Activated CD4-positive, alpha-beta memory T cell treated with anti-CD3 and anti-CD28 coated beads, Interleukin-2, amount 10 ng/mL, durations not matched to agents 7 days and 5 days (primary cell): ENCODE measurements at regions of chr14 and their contacts with region 1.

Region 1: DNA sequence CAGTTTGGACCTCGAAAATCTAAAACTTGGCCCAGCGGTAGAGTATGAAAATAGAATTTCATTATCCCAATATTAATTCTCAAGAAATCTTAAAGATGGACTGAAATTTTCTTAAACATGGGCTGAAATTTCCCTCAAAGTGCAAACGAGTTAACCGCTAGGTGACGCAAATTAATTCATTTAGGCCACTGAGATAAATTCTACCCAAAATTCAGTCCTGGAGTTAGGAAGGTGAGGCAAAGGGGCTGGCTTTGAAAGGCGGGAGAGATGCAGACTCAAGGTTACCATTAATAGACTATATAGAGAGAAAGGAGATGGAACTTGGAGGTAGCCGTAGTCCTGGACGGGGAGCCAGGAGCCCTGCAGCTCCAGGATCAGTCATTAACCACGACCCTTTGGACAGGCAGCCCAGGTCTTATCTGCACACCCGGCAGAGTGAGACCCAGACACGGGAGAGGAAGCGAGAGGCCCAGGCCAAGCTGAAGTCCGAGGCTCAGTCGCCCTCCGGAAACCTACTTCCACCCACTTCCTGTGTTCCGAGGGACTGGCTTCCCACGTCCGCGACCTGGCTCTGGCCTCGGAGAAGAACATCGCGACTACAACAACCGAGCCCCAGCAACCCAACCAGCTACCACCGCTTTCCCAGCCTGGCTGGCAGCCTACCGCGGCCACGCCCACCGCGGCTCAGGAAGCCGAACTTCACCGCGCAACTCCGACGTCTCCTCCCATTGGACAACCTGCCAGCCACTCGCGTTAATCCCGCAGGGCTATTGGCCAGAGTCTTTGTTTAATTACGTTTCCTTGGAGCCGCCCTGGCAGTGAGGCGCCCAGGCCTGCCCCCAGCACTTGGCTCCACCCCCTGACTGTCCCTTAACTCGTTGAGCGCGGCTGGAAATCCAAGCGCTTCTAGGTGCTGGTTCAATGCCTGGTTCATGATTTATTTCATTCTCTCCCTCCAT is at the start of gene EFCAB11:
- DNase-seq: peak; percentile 97
- H3K4me3 Mint-ChIP-seq: peak within 1 kb of the TSS; percentile 95
- H3K27ac Mint-ChIP-seq: peak within 1 kb of the TSS; percentile 100
- H3K4me1 Mint-ChIP-seq: peaks cover 42% of the 10 kb centered on the region
- H3K27me3 Mint-ChIP-seq: no peaks in the 10 kb centered on the region
- total RNA-seq, gene EFCAB11: 9.6 to 9.9 TPM

Region 2: DNA sequence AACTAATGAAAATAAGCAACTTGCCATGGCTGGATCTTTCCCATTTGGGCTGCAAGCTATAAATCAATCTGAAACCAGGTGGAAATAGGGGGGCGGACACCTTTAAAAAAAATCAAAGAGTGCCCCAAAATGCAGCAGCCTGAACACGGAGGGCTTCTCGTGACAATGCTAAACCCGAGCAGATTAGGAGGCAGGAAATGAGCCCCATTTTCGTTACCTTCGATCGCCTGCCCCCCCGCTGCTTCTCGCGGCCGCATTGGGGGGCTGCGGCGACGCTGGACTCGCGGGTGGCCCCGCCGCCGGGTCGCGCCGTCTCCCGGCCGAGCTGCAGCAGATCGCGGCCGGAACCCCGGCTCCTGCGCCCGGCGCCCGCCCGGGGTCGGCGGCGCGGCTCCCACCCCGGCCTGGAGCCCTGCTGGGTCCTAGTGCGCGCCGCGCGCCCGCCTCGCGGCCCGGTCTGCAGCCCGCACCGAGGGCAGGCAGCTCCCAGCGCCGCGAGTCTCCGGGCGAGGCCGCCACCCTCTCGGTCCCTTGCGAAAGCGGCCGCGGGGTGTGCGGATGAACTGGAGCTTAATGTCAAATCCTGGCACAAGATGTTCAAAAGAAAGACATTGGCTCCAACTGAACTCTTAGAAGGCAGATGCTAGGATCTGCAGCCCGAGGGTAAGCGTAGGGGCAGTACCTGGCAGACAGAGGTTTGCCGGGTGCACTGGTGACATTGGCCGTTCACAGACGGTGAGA is 335.4 kb before region 1 on chr14:
- CTCF ChIA-PET with region 1: no interaction called
- POLR2A ChIA-PET with region 1: interaction called, 17 read pairs
- DNase-seq: peak; percentile 77
- H3K4me3 Mint-ChIP-seq: peak overlapping the region; percentile 95
- H3K27ac Mint-ChIP-seq: peak overlapping the region; percentile 95
- H3K4me1 Mint-ChIP-seq: peaks cover 61% of the 10 kb centered on the region
- H3K27me3 Mint-ChIP-seq: no peaks in the 10 kb centered on the region

Region 3: GRCh38 chr14:89915114-89915878 is 39.1 kb before region 1 on chr14:
- CTCF ChIA-PET with region 1: no interaction called
- POLR2A ChIA-PET with region 1: no interaction called
- DNase-seq: peak; percentile 59
- H3K4me3 Mint-ChIP-seq: no peak overlapping the region
- H3K27ac Mint-ChIP-seq: no peak overlapping the region
- H3K4me1 Mint-ChIP-seq: peaks cover 2% of the 10 kb centered on the region
- H3K27me3 Mint-ChIP-seq: peaks cover 7% of the 10 kb centered on the region

Region 4: GRCh38 chr14:89941830-89942377 is 12.4 kb before region 1 on chr14:
- CTCF ChIA-PET with region 1: interaction called, 15 read pairs
- POLR2A ChIA-PET with region 1: interaction called, 24 read pairs
- DNase-seq: no peak
- H3K4me3 Mint-ChIP-seq: no peak overlapping the region
- H3K27ac Mint-ChIP-seq: no peak overlapping the region
- H3K4me1 Mint-ChIP-seq: no peaks in the 10 kb centered on the region
- H3K27me3 Mint-ChIP-seq: no peaks in the 10 kb centered on the region

Region 5: DNA sequence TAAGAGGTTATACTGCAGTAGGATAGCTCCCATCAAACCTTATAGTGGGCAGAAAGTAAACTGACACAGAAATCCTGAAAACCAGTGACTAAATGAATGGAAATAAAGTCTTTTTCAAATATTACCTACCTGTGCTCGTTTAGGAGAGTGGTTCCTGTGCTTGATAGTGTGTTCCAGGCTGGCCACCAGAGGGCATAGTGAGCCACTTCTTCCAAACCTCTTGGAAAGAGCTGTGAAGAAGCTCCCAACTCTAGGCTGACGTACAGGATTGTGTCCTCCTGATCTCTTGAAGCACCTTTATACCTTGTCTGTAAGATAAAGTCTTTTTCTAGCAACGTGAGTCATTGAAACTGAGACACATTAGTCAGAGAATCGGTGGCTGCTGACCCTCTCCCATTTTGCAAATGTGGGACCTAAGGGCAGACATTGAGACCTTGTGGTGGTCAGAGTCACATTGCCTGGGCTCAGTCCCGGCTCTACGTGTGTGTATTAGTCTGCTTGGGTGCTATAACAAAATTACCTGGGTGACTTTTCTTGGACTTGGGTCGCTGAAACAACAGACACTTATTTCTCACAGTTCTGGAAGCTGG is 19.0 kb after region 1 on chr14:
- CTCF ChIA-PET with region 1: interaction called, 125 read pairs
- POLR2A ChIA-PET with region 1: interaction called, 33 read pairs
- DNase-seq: peak; percentile 65
- H3K4me3 Mint-ChIP-seq: no peak overlapping the region
- H3K27ac Mint-ChIP-seq: no peak overlapping the region
- H3K4me1 Mint-ChIP-seq: peaks cover 1% of the 10 kb centered on the region
- H3K27me3 Mint-ChIP-seq: no peaks in the 10 kb centered on the region

Region 6: GRCh38 chr14:90204516-90204915 is 250.2 kb after region 1 on chr14:
- CTCF ChIA-PET with region 1: no interaction called
- POLR2A ChIA-PET with region 1: no interaction called
- DNase-seq: no peak
- H3K4me3 Mint-ChIP-seq: no peak overlapping the region
- H3K27ac Mint-ChIP-seq: no peak overlapping the region
- H3K4me1 Mint-ChIP-seq: no peaks in the 10 kb centered on the region
- H3K27me3 Mint-ChIP-seq: no peaks in the 10 kb centered on the region